ENCODE measurements at regions of chr11 and their contacts with region 1.

Region 1: DNA sequence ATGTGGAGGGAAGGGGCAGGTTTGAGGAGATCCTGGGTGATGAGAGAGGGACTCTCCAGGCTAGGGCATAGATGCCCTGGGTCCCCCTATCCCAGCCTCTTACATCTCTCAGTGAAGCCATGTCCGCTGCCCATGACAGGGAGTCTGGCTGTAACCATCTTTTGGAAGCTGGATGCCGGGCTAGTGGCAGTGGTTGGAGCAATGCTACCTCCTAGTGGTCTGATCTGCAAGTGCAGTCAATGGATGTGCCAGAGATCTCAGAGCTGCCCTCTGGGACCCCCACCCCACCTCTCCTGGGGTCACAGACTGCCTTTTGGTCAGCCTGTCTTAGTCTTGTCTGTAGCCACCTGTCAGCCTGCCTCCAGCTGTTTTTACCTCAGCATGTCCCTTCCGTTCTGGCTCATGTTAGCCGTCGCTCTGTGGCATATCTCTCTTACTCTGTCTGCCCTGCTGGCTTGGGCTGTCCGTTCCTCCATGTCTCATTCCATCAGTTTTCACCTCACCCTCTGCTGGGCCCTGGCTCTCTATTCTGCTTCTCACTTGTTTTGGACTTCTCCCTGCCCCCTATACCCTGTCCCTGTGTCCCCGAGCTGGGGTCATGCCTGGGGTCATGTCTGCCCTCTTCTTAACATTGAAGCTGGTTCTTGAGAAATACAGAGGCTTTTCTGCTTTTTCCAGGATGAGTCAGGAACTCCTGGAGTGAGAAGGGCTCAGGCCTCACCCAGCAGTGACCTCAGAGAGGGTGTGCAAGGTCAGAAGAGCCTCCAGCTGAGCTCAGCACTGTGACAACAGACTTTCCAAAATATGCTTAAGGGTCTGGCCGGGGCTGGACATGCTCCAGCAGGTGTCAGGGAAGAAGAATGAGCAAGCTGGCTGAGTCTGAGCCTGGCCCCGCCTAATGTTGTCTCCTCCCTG is 52.0 kb upstream of the THY1 start:
- DNase-seq: peak; percentile 45 to 88 (median 76)
- H3K4me3 ChIP-seq: no peak overlapping the region
- H3K27ac ChIP-seq: peak overlapping the region in 14 of 59 donors; percentile 2 to 79 (median 50)
- H3K27me3 ChIP-seq: no peaks in the 10 kb centered on the region
- CTCF ChIP-seq: peak; percentile 85 to 99 (median 95)

Region 2: GRCh38 chr11:119338318-119338907 is 136.5 kb before region 1 on chr11:
- intact Hi-C with region 1: loop called in 1 of 2 experiments (anchors 1 kb)
- DNase-seq: peak in 9 of 10 donors; percentile 64 to 88 (median 79)
- H3K4me3 ChIP-seq: peak overlapping the region in 34 of 59 donors; percentile 1 to 76 (median 64)
- H3K27ac ChIP-seq: peak overlapping the region in 37 of 59 donors; percentile 3 to 90 (median 49)
- H3K27me3 ChIP-seq: peaks cover 0 to 5% (median 0%) of the 10 kb centered on the region in 45 donors
- CTCF ChIP-seq: peak; percentile 41 to 85 (median 77)

Region 3: DNA sequence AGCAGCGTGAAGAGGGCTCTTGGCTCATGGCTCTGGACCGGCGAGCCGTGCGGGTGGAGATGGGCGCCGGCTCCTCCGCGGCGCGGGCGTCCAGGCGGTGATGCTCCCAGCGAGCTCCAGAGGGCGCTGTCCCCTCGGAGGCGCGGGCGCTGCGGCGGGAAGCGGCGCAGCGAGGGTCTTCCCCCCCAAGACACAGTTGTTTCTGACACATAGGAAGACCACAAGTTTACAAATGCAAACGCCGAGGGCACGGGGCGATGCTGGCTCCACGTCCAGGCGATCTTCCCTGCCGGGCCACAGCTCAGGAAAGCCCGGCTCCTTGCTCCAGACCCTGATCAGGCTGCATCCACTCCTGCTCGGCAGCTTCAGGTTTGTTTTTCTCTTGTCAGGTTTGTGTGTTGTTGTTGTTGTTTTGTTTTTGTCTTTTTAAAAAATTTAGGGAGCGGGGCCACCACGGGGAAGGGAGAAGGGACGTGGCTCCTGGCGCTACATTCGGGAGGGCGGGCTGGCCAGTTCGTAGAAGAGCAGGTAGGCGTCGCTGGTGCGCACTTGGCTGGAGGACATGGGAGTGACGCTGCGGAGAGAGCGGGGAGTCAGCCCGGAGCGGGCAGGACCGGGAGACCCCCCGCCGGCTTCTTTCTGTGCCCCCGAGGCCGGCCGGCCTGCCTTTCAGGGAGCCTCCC is 118.4 kb before region 1 on chr11:
- intact Hi-C with region 1: loop called (anchors 2 to 5 kb)
- DNase-seq: peak in 8 of 10 donors; percentile 67 to 83 (median 77)
- H3K4me3 ChIP-seq: peak overlapping the region in 57 of 59 donors; percentile 4 to 64 (median 39)
- H3K27ac ChIP-seq: peak overlapping the region in 58 of 59 donors; percentile 1 to 92 (median 74)
- H3K27me3 ChIP-seq: no peaks in the 10 kb centered on the region
- CTCF ChIP-seq: peak; percentile 51 to 99 (median 90)

Region 4: GRCh38 chr11:119421941-119422808 is 52.8 kb before region 1 on chr11:
- intact Hi-C with region 1: loop called in 1 of 2 experiments (anchors 2 kb)
- DNase-seq: peak in 8 of 10 donors; percentile 46 to 72 (median 59)
- H3K4me3 ChIP-seq: peak overlapping the region; percentile 43 to 86 (median 71)
- H3K27ac ChIP-seq: peak overlapping the region in 58 of 59 donors; percentile 25 to 97 (median 89)
- H3K27me3 ChIP-seq: peaks cover 0 to 17% (median 0%) of the 10 kb centered on the region in 45 donors
- CTCF ChIP-seq: peak in 2 of 56 donors; percentile 6 to 20

Region 5: GRCh38 chr11:119615003-119615881 is 140.3 kb after region 1 on chr11:
- intact Hi-C with region 1: no loop called
- DNase-seq: peak in 9 of 10 donors; percentile 64 to 90 (median 80)
- H3K4me3 ChIP-seq: no peak overlapping the region
- H3K27ac ChIP-seq: peak overlapping the region; percentile 34 to 99 (median 92)
- H3K27me3 ChIP-seq: no peaks in the 10 kb centered on the region
- CTCF ChIP-seq: peak in 5 of 56 donors; percentile 9 to 27 (median 17)